Activated T-helper 1 cell treated with anti-CD3 and anti-CD28 coated beads, Interleukin-12 subunit alpha, Interleukin-12 subunit beta, Interleukin-2, Interleukin-4 antibody, amounts not matched to agents 30 ng/mL and 10 ng/mL and 1 ng/mL, durations not matched to agents 14 hours and 24 hours and 36 hours (primary cell): ENCODE measurements at regions of chr10 and their contacts with region 1.

Region 1: DNA sequence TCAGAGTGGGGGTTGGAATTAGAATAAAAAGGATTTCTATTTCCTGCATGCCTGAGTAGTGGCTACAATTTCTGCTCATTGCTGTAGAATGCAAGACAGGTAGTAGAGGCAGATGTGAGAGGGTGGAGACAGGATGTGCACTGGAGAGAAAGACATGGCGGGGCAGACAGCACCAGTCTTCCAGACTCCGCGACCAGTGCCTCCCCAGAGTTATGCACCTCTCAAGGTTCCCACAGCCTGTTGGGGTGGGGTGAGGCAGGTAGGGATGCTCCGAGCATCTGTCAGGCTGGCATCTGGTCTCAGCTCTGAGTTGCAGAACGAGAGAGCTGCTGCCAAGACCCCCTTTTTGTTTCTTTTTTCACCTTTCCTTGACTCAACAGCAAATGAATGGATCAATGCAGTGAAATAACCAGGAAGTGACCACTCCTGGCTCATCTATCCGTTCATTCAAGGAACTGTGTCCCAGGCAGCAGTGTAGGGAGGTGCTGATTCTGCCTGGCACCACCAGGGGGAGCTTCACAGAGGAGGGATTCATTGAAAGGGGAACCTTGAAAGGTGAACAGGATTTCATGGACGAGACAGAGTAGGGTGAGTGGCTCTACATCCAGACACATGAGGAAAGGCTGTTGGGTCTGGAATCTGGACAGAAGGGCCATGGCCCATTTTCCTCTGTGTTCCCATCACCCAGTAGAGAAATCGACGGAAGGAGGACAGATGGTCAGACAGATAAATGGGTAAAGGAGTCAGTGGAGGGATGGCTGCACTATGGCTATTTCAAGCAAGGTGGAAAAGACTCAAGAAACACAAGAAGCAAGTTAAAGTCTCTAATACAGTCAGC is 17.2 kb upstream of the SLC18A3 start:
- DNase-seq: peak; percentile 25
- H3K4me3 Mint-ChIP-seq: no peak overlapping the region
- H3K27ac Mint-ChIP-seq: no peak overlapping the region
- H3K4me1 Mint-ChIP-seq: no peaks in the 10 kb centered on the region
- H3K27me3 Mint-ChIP-seq: peaks cover 6% of the 10 kb centered on the region

Region 2: DNA sequence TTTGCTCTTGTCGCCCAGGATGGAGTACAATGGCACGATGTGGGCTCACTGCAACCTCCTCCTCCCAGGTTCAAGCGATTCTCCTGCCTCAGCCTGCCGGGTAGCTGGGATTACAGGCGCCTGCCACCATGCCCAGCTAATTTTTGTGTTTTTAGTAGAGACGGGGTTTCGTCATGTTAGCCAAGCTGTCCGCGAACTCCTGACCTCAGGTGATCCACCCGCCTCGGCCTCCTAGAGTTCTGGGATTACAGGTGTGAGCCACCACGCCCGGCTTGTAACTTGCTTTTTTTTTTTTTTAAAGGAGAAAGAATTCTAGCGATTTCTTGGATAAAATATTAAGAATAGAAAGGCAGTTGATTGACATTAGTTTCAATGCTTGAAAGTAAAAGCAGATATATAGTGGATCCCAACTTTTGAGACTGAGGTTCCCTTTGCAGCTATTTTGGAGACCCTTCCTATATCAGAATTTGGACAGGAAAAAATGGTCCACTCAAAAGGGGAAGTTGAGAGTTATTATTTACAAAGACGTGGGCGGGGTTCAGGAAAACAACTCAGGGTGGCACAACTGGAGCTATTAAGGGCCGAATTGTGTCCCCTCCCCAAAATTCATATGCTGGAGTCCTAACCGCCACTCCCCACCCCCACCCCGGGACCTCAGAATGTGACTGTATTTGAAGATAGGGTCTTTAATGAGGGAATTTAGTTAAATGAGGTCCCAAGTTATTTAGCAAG is 52.7 kb before region 1 on chr10:
- intact Hi-C with region 1: no loop called
- DNase-seq: no peak
- H3K4me3 Mint-ChIP-seq: no peak overlapping the region
- H3K27ac Mint-ChIP-seq: no peak overlapping the region
- H3K4me1 Mint-ChIP-seq: peaks cover 27% of the 10 kb centered on the region
- H3K27me3 Mint-ChIP-seq: peaks cover 5% of the 10 kb centered on the region

Region 3: DNA sequence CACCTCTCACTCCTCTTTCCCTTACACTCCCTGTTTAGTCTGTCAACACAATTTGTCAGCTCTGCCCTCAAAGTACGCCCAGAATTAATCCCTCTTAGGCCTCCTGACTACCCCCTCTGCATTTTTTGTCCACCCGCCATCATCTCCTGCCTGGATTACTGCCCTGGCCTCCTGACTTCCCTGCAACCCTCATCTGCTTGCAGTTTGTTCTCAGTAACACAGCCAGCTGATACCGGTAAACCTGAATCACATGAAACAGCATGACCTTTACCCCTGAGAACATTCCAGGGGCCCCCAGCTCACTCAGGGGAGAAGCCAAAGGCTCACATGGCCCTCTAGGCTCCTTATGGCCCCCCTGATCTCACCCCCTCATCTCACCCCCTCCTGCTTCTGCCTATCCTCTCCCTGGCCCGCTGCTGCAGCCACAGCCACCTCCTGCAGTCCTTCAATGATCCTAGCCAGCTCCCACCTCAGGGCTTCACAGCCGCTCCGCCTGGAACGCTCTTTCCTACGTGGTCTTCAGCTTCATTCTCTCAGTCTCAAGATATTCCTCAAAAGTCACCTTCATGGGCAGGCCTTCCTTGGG is 95.4 kb after region 1 on chr10:
- intact Hi-C with region 1: loop called (anchors 5 kb)
- DNase-seq: no peak
- H3K4me3 Mint-ChIP-seq: no peak overlapping the region
- H3K27ac Mint-ChIP-seq: no peak overlapping the region
- H3K4me1 Mint-ChIP-seq: no peaks in the 10 kb centered on the region
- H3K27me3 Mint-ChIP-seq: peaks cover 53% of the 10 kb centered on the region